AG04449 (cell line): ENCODE measurements at regions of chr7 and their contacts with region 1.

Region 1: DNA sequence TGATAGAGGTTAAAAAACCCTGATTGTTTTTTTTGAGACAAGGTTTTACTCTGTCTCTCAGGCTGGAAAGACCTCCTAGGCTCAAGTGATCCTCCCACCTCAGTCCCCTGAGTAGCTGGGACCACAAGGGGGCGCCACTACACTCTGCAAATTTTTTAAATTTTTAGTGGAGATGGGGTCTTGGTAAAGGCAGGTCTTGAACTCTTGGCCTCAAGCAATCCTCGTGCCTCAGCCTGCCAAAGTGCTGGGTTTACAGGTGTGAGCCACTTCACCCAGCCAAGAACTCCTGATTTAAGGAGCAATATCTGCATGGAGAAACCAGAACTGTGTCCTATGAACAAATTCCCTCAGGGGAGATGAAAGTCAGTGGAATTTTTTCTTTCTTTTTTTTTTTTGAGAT is 7.3 kb upstream of the KLHDC10 start:
- DNase-seq: no peak
- H3K4me3 ChIP-seq: no peak overlapping the region
- CTCF ChIP-seq: peak; percentile 71

Region 2: DNA sequence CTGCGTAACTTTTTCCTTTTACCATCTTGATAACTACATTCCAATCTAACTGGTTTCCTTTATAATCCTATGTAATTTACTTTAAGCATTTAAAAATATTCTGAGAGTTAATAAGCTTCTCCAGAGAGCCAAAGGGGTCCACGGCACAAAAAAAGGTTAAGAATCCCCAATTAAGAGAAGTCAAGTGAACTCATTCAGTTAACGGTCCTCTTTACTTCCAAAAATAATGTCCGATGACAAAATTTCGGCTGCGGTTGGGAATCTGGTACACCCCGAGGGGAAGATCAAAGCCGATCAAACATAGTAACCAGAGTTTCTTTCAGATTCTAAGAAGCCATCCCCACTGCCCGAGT is 12.3 kb before region 1 on chr7:
- CTCF ChIA-PET with region 1: interaction called, 18 read pairs
- POLR2A ChIA-PET with region 1: no interaction called
- DNase-seq: no peak
- H3K4me3 ChIP-seq: peak overlapping the region; percentile 80
- CTCF ChIP-seq: no peak